Colonic mucosa (tissue), 4 donors: ENCODE measurements at regions of chr18 and their contacts with region 1.

Region 1: DNA sequence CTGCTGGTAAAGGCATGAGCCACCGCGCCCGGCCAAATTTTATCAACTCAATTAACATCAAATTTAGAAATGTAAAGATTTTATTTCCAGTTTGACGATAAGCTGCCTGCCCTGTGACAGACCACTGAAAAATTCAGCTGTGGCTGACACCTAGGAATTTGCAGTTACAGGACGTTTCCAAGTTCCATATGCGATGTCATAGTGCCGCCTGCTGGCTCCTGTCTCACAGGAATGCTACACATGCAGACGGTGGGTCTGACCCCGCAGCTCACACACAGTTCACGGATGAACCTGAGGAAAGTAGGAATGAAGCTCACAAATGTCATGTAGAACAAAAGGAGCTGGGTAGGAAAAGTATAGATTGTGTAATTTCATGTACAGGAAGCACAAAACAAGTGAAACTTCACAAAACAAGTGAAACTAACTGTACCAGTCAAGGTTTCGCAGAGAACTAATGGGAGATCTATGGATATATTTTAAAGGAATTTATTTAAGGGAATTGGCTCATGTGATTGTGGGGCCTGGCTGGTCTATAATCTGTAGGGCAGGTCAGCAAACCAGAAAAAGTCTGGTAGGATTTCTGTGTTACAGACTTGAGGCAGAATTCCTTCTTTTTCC is 13.2 kb upstream of the SEH1L start:
- DNase-seq: peak; percentile 81
- H3K4me3 ChIP-seq: no peak overlapping the region
- H3K27ac ChIP-seq: no peak overlapping the region
- H3K4me1 ChIP-seq: no peaks in the 10 kb centered on the region
- H3K27me3 ChIP-seq: no peaks in the 10 kb centered on the region
- CTCF ChIP-seq: peak; percentile 84

Region 2: DNA sequence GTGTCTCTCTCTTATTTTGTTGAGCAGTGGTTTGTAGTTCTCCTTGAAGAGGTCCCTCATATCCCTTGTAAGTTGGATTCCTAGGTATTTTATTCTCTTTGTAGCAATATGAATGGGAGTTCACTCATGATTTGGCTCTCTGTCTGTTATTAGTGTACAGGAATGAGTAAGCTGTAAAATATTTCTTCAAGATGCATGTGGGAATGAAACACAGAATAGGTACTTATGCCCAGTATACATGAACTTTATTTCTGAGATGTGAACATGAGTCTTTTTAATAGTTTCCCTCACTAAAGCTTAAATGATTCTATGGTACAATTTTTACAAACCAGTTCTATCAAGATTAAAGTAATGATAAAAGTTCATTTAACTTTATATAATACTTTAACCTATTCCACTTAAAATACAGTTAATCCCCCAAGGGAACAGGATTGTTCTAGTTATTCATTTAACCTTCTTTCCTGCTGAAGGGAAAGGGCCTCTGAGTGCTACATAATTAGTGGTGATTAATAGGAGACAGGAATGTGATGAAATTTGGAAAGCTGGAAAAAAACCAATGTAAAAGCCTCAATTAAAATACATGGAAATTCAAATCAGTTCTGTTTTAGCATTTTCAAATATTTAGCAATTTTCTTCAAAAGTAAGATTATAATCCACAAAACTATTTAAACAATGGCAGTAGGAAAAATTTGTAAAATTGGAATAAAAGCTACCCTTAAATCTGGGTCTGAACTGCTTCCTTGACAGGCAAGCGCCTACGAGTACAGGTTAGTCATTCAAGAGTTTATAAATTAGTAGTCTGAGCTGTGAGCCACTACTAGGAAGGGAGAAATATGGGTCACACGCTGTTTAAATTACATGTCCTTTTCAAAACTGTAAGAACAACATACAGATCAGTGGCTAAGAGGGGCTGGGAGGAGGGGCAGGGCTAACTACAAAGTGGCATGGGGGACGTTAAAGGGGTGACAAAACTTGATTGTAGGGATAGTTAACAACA is 305.6 kb before region 1 on chr18:
- intact Hi-C with region 1: no loop called
- DNase-seq: no peak
- H3K4me3 ChIP-seq: no peak overlapping the region
- H3K27ac ChIP-seq: no peak overlapping the region
- H3K4me1 ChIP-seq: no peaks in the 10 kb centered on the region
- H3K27me3 ChIP-seq: no peaks in the 10 kb centered on the region
- CTCF ChIP-seq: no peak

Region 3: GRCh38 chr18:12679183-12679786 is 255.3 kb before region 1 on chr18:
- intact Hi-C with region 1: no loop called
- DNase-seq: peak; percentile 29
- H3K4me3 ChIP-seq: no peak overlapping the region
- H3K27ac ChIP-seq: peak overlapping the region; percentile 14
- H3K4me1 ChIP-seq: no peaks in the 10 kb centered on the region
- H3K27me3 ChIP-seq: no peaks in the 10 kb centered on the region
- CTCF ChIP-seq: no peak

Region 4: DNA sequence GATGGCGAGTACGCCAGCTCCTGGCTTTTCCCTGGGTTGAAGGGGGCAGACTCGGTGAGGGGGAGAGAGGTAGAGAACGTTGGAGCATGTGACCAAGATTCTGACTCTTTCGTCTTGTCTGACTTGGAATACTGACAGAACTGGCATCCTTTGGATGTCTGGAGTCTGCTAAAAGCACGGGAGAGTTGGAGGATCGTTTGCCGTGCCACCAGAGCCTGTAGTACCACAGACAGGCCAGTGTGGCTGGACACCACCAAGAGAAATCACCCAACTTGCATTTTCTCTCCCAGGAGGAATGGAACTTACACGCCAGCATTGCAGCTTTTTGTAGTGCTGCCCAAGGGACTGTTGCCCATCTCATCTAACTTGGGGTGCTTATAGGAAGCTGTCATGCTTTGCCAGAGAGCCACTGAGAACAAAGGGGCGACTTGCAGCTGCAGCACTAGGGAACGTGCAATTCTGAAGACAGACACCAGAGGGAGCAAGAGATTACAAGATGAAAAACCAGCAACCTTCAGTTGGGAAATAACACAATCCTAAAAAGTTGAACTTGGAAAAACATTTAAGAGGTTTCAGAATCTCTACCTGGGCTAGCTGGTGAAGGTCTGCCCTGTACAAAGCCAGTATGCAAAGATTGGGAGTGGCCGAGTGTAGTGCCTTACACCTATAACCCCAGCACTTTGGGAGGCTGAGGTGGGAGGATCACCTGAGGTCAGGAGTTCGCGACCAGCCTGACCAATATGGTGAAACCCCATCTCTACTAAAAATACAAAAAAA is 207.6 kb before region 1 on chr18:
- intact Hi-C with region 1: loop called (anchors 5 kb)
- DNase-seq: peak; percentile 74
- H3K4me3 ChIP-seq: no peak overlapping the region
- H3K27ac ChIP-seq: no peak overlapping the region
- H3K4me1 ChIP-seq: no peaks in the 10 kb centered on the region
- H3K27me3 ChIP-seq: no peaks in the 10 kb centered on the region
- CTCF ChIP-seq: peak; percentile 75

Region 5: DNA sequence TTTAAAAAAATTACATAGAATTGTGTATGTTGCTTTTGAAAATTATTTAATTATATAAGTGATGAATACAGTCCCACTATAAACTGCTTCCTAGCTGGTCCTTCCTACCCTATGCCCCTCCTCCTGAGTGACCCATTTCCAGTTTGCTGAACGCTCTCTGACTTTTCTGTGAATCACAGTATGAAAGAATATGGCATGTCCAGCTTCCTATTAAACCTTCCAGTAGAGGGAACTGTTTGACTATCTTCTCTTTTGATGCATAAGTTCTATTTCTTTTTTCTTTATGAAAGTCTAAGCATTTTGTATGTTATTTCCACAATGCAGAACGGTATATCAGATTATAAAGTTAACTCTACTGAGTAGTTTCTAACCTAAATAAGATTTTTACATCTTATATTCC is 190.5 kb before region 1 on chr18:
- intact Hi-C with region 1: loop called (anchors 5 kb)
- DNase-seq: no peak
- H3K4me3 ChIP-seq: no peak overlapping the region
- H3K27ac ChIP-seq: no peak overlapping the region
- H3K4me1 ChIP-seq: no peaks in the 10 kb centered on the region
- H3K27me3 ChIP-seq: no peaks in the 10 kb centered on the region
- CTCF ChIP-seq: peak; percentile 41

Region 6: GRCh38 chr18:12890506-12890905 is 44.1 kb before region 1 on chr18:
- intact Hi-C with region 1: loop called (anchors 5 kb)
- DNase-seq: no peak
- H3K4me3 ChIP-seq: no peak overlapping the region
- H3K27ac ChIP-seq: no peak overlapping the region
- H3K4me1 ChIP-seq: no peaks in the 10 kb centered on the region
- H3K27me3 ChIP-seq: peaks cover 5% of the 10 kb centered on the region
- CTCF ChIP-seq: no peak

Region 7: GRCh38 chr18:13425462-13426133 is 491.0 kb after region 1 on chr18:
- intact Hi-C with region 1: no loop called
- DNase-seq: peak; percentile 41
- H3K4me3 ChIP-seq: no peak overlapping the region
- H3K27ac ChIP-seq: no peak overlapping the region
- H3K4me1 ChIP-seq: no peaks in the 10 kb centered on the region
- H3K27me3 ChIP-seq: no peaks in the 10 kb centered on the region
- CTCF ChIP-seq: no peak

Region 8: GRCh38 chr18:13585379-13586153 is 651.0 kb after region 1 on chr18:
- intact Hi-C with region 1: no loop called
- DNase-seq: no peak
- H3K4me3 ChIP-seq: no peak overlapping the region
- H3K27ac ChIP-seq: no peak overlapping the region
- H3K4me1 ChIP-seq: no peaks in the 10 kb centered on the region
- H3K27me3 ChIP-seq: no peaks in the 10 kb centered on the region
- CTCF ChIP-seq: no peak